Gastrocnemius medialis (tissue), 4 donors: ENCODE measurements at regions of chr4 and their contacts with region 1.

Region 1: GRCh38 chr4:54233277-54233696 is 4.2 kb downstream of the PDGFRA start:
- DNase-seq: peak; percentile 56 to 66
- ATAC-seq: peak; percentile 72 to 79
- H3K4me3 ChIP-seq: peak overlapping the region; percentile 55 to 86 (median 62)
- H3K27ac ChIP-seq: peak overlapping the region; percentile 58 to 60 (median 59)
- H3K4me1 ChIP-seq: peaks cover 12 to 38% of the 10 kb centered on the region in 2 donors
- H3K27me3 ChIP-seq: peaks cover 44 to 47% (median 46%) of the 10 kb centered on the region in 3 donors
- CTCF ChIP-seq: peak; percentile 79 to 90 (median 84)
- POLR2A ChIP-seq: no peak

Region 2: DNA sequence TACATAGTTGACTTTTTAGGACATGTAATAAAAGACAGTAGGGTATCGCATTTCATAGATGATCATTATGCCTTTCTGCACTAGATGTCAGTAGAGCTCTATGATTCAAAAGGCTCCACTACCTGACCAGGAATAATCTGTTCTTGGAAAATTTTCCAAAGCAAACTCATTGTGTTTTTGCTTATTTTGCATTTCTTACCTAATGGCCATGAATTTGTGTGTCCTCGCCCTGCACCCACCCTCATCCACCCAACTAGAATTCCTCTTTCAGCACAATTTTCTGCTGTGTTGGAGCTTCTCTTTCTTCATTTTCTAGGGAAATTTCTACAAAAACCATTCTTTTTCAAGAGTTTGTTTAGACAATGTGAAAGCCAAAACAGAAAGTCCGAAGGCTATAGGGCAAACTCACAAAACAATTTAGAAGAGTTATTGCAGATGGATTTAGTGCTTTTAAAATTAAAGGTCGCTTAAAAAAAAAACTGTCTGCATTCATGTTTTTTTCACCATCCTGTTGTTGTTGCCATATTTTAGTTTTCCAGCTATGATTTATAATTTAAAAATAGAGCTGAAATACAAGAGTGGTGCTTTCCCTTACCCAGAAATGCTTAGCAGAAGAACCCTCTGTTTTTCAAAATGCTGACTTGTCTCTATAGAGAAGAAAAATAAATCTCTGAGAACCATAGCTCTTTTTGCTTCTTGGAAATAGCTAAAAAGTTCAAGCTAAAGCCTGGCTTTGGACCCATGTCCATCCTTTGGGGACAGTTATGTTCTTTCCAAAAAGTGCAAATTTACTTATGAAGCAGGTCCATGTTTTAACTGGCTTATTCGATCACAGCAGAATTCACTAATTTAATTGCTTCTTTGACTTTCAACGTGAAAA is 1998.5 kb before region 1 on chr4:
- in situ Hi-C with region 1: loop called in 1 of 4 experiments (anchors 25 kb)
- intact Hi-C with region 1: no loop called
- DNase-seq: no peak
- ATAC-seq: peak; percentile 77 to 82
- H3K4me3 ChIP-seq: no peak overlapping the region
- H3K27ac ChIP-seq: no peak overlapping the region
- H3K4me1 ChIP-seq: no peaks in the 10 kb centered on the region
- H3K27me3 ChIP-seq: no peaks in the 10 kb centered on the region
- CTCF ChIP-seq: peak in 4 of 5 experiments; percentile 22 to 44 (median 37)
- POLR2A ChIP-seq: no peak

Region 3: DNA sequence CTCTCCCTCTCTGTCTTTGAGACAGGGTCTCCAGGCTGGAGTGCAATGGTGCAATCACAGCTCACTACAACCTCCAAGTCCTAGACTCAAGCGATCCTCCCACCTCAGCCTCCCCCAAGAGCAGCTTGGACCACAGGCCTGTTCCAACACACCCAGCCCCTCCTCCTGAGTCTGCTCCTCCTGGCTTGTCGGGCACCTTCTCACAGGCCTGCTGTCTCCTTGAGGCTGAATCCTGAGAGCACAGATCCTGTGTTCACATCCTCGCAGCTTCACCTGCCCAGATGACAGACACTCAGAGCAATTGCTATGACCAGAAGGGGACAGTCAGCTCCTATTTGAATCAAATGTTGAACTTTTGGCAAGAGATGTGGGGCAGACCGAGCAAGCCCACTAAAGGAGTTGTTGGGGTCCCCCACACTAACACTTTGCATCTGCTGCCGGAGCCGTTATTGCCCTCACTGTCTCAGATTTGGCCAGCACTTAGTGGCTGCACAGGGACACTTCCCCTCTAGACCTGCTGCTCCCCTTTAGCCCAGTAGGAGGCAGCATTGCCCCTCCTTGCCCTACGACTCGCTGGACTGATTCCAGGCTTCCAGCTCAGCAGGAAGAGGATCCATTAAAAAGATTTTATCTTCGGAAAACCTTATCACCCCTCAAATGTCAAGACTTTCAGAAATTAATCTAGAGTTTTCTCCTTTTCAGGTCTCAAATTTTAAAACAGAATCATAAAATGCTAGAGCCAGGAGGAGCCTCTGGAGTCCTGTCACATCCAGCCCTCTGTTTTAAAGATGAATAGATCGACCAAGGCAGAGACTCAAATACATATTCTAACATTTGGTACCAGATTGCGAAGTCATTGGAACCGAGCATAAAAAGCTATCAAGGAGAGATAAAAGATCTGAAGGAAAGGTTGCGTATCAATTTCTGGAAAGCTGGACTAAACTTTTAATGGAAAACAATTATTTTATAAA is 1687.9 kb before region 1 on chr4:
- in situ Hi-C with region 1: loop called in 1 of 4 experiments (anchors 25 kb)
- intact Hi-C with region 1: no loop called
- DNase-seq: peak; percentile 31 to 55
- ATAC-seq: peak; percentile 81 to 90
- H3K4me3 ChIP-seq: no peak overlapping the region
- H3K27ac ChIP-seq: no peak overlapping the region
- H3K4me1 ChIP-seq: peaks cover 0 to 5% of the 10 kb centered on the region in 2 donors
- H3K27me3 ChIP-seq: no peaks in the 10 kb centered on the region
- CTCF ChIP-seq: peak; percentile 73 to 94 (median 87)
- POLR2A ChIP-seq: no peak

Region 4: DNA sequence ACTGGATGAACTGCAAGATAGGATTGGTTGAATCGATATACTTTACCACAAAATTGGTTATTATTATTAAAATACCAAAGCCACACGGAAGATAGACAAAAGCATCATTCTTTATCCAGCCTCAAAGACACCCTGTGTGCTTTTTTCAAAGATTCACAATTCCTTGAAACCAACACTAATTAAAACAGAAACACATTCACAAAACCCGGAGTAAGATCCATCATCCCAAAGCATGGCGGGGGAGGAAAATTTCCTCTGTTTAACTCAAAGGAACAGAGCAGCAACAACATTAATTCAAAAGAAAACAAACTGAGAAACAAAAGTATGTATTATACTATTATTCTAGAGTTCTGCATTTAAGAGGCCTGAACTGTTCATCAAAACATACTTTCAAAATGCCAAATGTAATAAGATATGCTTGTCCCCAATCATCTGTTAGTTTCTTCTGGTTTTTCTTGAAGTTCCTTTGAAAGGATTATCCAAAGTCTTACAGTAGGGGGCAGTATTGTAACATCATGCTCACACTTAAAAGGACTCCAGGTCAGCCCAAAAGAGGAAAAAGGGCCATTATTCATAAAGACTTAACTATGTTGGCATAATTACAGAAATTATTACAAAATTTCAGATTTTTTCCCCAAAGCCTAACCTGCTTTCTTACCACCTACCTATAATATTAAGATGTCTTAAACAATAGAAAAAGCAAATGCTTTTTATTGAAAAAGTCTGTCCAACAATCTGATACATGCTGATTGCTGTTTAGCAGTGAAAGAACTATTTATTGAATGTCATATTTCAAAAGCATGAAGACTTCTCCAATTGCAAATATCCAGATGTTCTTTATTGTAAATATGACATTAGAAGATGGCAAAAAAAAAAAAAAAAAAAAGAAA is 1036.2 kb before region 1 on chr4:
- in situ Hi-C with region 1: loop called in 2 of 4 experiments (anchors 10 kb)
- intact Hi-C with region 1: loop called (anchors 1 kb)
- DNase-seq: no peak
- ATAC-seq: peak in 1 of 2 donors; percentile 55
- H3K4me3 ChIP-seq: no peak overlapping the region
- H3K27ac ChIP-seq: no peak overlapping the region
- H3K4me1 ChIP-seq: no peaks in the 10 kb centered on the region
- H3K27me3 ChIP-seq: no peaks in the 10 kb centered on the region
- CTCF ChIP-seq: peak; percentile 44 to 71 (median 60)
- POLR2A ChIP-seq: no peak

Region 5: GRCh38 chr4:53377319-53378170 is 855.7 kb before region 1 on chr4 and contains the start of gene FIP1L1:
- in situ Hi-C with region 1: loop called in 2 of 4 experiments (anchors 25 kb)
- intact Hi-C with region 1: no loop called
- DNase-seq: peak; percentile 84 to 94
- ATAC-seq: peak; percentile 96 to 97
- H3K4me3 ChIP-seq: peak within 1 kb of the TSS; percentile 84 to 93 (median 90)
- H3K27ac ChIP-seq: peak within 1 kb of the TSS; percentile 85 to 87 (median 85)
- H3K4me1 ChIP-seq: peaks cover 13% of the 10 kb centered on the region in 2 donors
- H3K27me3 ChIP-seq: peaks cover 0 to 4% (median 0%) of the 10 kb centered on the region in 3 donors
- CTCF ChIP-seq: no peak
- POLR2A ChIP-seq: peak; percentile 77 to 84
- total RNA-seq, gene FIP1L1: 26.7 to 36.6 (median 31.1) TPM

Region 6: GRCh38 chr4:53702334-53703266 is 530.7 kb before region 1 on chr4:
- in situ Hi-C with region 1: loop called in 2 of 4 experiments (anchors 10 to 25 kb)
- intact Hi-C with region 1: loop called (anchors 10 kb)
- DNase-seq: peak; percentile 62 to 75
- ATAC-seq: peak; percentile 56 to 68
- H3K4me3 ChIP-seq: peak overlapping the region; percentile 22 to 50 (median 42)
- H3K27ac ChIP-seq: peak overlapping the region; percentile 45 to 71 (median 58)
- H3K4me1 ChIP-seq: peaks cover 12 to 21% of the 10 kb centered on the region in 2 donors
- H3K27me3 ChIP-seq: no peaks in the 10 kb centered on the region
- CTCF ChIP-seq: no peak
- POLR2A ChIP-seq: no peak

Region 7: GRCh38 chr4:54077812-54078211 is 155.5 kb before region 1 on chr4:
- in situ Hi-C with region 1: no loop called
- intact Hi-C with region 1: no loop called
- DNase-seq: no peak
- ATAC-seq: no peak
- H3K4me3 ChIP-seq: no peak overlapping the region
- H3K27ac ChIP-seq: no peak overlapping the region
- H3K4me1 ChIP-seq: no peaks in the 10 kb centered on the region
- H3K27me3 ChIP-seq: no peaks in the 10 kb centered on the region
- CTCF ChIP-seq: no peak
- POLR2A ChIP-seq: no peak